ENCODE measurements at regions of chr5 and their contacts with region 1.

Region 1: DNA sequence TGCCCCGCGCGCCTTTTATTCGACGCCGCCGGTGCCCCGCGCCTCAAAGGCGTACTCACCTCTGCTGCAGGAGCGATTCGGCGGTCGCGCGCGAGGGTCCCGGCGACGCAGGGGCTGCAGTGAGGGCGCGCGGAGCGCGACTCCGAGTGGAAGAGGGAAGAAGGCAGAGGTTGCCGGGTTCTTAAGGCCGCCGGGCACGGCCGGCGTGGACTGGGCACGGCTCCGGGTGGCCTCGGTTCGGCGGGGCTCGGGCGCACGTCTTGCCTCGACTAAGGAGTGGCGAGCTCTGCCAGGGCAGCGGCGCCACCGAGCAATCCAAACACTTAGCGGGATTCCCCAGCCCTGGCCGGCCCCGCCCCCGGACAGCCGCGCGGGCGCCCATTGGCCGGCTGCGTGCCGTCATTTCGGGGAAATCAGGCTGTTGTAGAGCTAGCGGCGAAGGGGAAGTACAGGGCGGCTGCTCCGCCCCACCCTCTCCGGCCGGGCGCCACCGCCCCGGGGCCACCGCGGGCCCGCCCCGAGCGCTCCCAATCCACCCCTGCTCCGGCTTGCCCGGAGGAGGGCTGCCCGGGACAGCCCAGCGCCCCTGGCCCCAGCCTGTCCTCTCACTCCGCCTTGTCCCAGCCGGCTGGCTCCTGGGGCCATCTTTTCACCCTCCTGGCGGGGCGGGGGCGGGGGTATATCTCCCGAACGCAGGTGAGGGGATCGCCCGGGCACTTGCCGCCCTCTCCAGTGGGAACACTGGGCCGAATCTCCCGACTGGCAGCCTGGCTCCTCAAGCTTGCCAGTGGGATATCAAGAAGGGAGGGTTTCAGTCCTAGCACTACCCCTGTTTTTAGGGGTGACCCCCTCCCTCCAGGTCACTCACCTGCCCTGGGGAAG is at the start of gene IRF1:
- DNase-seq: peak; percentile 98
- H3K4me3 Mint-ChIP-seq: peak within 1 kb of the TSS; percentile 99
- H3K27ac Mint-ChIP-seq: peak within 1 kb of the TSS; percentile 95
- H3K4me1 Mint-ChIP-seq: peaks cover 69% of the 10 kb centered on the region
- H3K27me3 Mint-ChIP-seq: no peaks in the 10 kb centered on the region

Region 2: DNA sequence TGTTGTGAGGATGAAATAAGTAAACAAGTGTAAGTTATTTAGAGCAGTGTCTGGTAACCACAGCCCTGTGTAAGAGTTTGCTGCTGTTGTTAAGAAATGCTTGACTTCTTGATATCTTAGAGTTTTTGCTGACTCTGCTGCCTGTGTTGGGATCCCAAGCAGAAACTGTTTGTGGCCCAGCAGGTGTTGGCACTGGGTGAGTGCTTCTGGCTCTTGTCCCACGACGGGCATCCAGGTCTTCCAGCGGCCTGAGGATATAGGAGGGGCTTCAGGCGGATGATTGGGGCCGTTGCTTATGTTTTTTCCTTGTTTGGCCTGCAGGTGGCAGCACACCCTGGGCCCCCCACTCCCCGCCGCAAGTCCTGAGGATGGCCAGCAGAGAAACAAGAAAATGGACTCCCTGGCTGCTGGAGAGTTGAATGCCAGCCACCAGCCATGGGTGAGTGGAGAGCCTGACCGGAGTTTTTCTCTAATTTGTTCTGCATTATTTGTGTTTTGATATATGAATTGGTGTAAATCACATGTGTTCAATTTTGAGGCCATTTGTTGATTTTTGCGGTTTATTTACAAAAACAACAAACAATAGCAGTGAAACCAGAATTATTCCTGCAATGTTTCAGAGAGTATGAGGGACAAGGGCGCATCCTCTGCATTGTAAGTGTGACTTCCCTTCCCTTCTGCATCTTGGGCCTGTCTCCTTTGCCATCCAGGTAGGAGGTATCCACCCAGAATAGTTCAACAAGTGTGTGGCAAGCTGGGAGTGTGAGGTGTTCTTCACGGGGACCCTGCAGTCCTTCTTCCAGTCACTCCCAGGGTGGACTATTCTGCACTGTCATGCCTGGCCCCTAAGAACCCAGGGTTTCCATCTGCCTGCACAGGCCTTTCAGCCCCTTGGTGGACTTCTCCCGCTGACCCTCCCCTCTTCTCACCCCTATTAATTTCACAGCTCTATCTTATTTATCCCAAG is 70.9 kb before region 1 on chr5:
- CTCF ChIA-PET with region 1: interaction called, 87 read pairs
- DNase-seq: peak; percentile 75
- H3K4me3 Mint-ChIP-seq: peak overlapping the region; percentile 62
- H3K27ac Mint-ChIP-seq: peak overlapping the region; percentile 90
- H3K4me1 Mint-ChIP-seq: peaks cover 99% of the 10 kb centered on the region
- H3K27me3 Mint-ChIP-seq: no peaks in the 10 kb centered on the region

Region 3: GRCh38 chr5:132466433-132467286 is 24.1 kb before region 1 on chr5:
- CTCF ChIA-PET with region 1: interaction called, 29 read pairs
- DNase-seq: peak; percentile 87
- H3K4me3 Mint-ChIP-seq: peak overlapping the region; percentile 50
- H3K27ac Mint-ChIP-seq: peak overlapping the region; percentile 91
- H3K4me1 Mint-ChIP-seq: peaks cover 99% of the 10 kb centered on the region
- H3K27me3 Mint-ChIP-seq: no peaks in the 10 kb centered on the region

Region 4: GRCh38 chr5:132479111-132479951 is 11.4 kb before region 1 on chr5:
- CTCF ChIA-PET with region 1: interaction called, 29 read pairs
- DNase-seq: peak; percentile 23
- H3K4me3 Mint-ChIP-seq: no peak overlapping the region
- H3K27ac Mint-ChIP-seq: peak overlapping the region; percentile 78
- H3K4me1 Mint-ChIP-seq: peaks cover 83% of the 10 kb centered on the region
- H3K27me3 Mint-ChIP-seq: peaks cover 4% of the 10 kb centered on the region

Region 5: GRCh38 chr5:132556763-132557477 is 66.2 kb after region 1 on chr5 and contains the start of gene RAD50:
- CTCF ChIA-PET with region 1: no interaction called
- DNase-seq: peak; percentile 96
- H3K4me3 Mint-ChIP-seq: peak within 1 kb of the TSS; percentile 99
- H3K27ac Mint-ChIP-seq: peak within 1 kb of the TSS; percentile 92
- H3K4me1 Mint-ChIP-seq: peaks cover 30% of the 10 kb centered on the region
- H3K27me3 Mint-ChIP-seq: peaks cover 8% of the 10 kb centered on the region

Measured in activated naive CD4-positive, alpha-beta T cell treated with anti-CD3 and anti-CD28 coated beads, Interleukin-2, amount 10 ng/mL, durations not matched to agents 7 days and 5 days (primary cell).